ENCODE measurements at regions of chr1 and their contacts with region 1.

Region 1: GRCh38 chr1:89198491-89199072 is at the start of gene GBP4:
- DNase-seq: peak; percentile 72
- ATAC-seq: peak; percentile 44
- H3K4me3 ChIP-seq: peak within 1 kb of the TSS; percentile 59 to 89 (median 83)
- H3K4me3 Mint-ChIP-seq: peak within 1 kb of the TSS; percentile 94
- H3K27ac ChIP-seq: peak within 1 kb of the TSS; percentile 74 to 85
- H3K27ac Mint-ChIP-seq: peak within 1 kb of the TSS; percentile 88
- H3K4me1 ChIP-seq: peaks cover 34 to 37% of the 10 kb centered on the region in 2 donors
- H3K4me1 Mint-ChIP-seq: peaks cover 48% of the 10 kb centered on the region
- H3K27me3 ChIP-seq: no peaks in the 10 kb centered on the region
- H3K27me3 Mint-ChIP-seq: no peaks in the 10 kb centered on the region
- CTCF ChIP-seq: no peak
- total RNA-seq, gene GBP4: 35.3 and 43.9 TPM in 2 replicates

Region 2: DNA sequence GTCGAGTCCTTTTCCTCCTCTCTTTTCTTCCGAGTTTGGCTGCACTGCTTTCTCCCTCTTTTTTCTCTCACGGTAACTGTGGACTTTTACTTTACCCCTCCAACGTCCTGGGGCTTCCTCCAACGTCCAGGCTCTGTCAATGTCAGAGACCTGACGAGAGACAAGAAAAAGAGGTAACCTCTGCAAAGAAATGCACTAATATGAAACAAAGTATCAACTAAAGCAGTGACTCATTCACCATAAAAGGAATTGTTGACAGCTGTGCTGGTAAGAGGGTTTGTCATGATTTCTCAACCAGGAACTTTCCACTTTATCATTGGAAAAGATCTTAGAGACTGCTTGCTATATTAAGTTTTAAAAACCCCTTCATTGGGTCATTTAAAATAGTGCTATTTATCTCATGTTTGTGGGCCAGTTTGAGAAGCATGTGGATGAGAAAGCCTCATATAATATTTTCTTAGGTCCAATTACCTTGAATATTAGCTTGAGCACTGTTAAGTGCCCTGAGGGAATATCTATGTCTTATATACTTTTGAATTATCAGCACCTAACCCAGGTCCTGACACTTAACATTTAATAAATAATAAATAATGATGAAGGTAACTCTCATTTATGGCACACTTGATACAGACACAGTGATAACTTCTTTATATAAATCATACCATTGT is 72.5 kb before region 1 on chr1 and contains the start of gene GBP2:
- CTCF ChIA-PET with region 1: interaction called, 4 read pairs
- POLR2A ChIA-PET with region 1: interaction called, 5 read pairs
- intact Hi-C with region 1: loop called (anchors 2 kb)
- DNase-seq: peak; percentile 16
- ATAC-seq: peak; percentile 79
- H3K4me3 ChIP-seq: peak within 1 kb of the TSS; percentile 43 to 75 (median 59)
- H3K4me3 Mint-ChIP-seq: peak within 1 kb of the TSS; percentile 96
- H3K27ac ChIP-seq: peak within 1 kb of the TSS; percentile 60 to 61
- H3K27ac Mint-ChIP-seq: peak within 1 kb of the TSS; percentile 94
- H3K4me1 ChIP-seq: peaks cover 38 to 45% of the 10 kb centered on the region in 2 donors
- H3K4me1 Mint-ChIP-seq: peaks cover 61% of the 10 kb centered on the region
- H3K27me3 ChIP-seq: no peaks in the 10 kb centered on the region
- H3K27me3 Mint-ChIP-seq: no peaks in the 10 kb centered on the region
- CTCF ChIP-seq: no peak
- total RNA-seq, gene GBP2: 29.2 and 31.9 TPM in 2 replicates

Region 3: GRCh38 chr1:89274411-89274857 is 75.9 kb after region 1 on chr1:
- CTCF ChIA-PET with region 1: no interaction called
- POLR2A ChIA-PET with region 1: interaction called, 4 read pairs
- intact Hi-C with region 1: loop called (anchors 2 kb)
- DNase-seq: no peak
- ATAC-seq: no peak
- H3K4me3 ChIP-seq: peak overlapping the region in 1 of 5 experiments; percentile 18
- H3K4me3 Mint-ChIP-seq: peak overlapping the region; percentile 75
- H3K27ac ChIP-seq: no peak overlapping the region
- H3K27ac Mint-ChIP-seq: peak overlapping the region; percentile 70
- H3K4me1 ChIP-seq: peaks cover 30 to 37% of the 10 kb centered on the region in 2 donors
- H3K4me1 Mint-ChIP-seq: peaks cover 53% of the 10 kb centered on the region
- H3K27me3 ChIP-seq: no peaks in the 10 kb centered on the region
- H3K27me3 Mint-ChIP-seq: no peaks in the 10 kb centered on the region
- CTCF ChIP-seq: no peak

Region 4: GRCh38 chr1:89322402-89322801 is 123.8 kb after region 1 on chr1:
- CTCF ChIA-PET with region 1: no interaction called
- POLR2A ChIA-PET with region 1: no interaction called
- intact Hi-C with region 1: no loop called
- DNase-seq: no peak
- ATAC-seq: no peak
- H3K4me3 ChIP-seq: no peak overlapping the region
- H3K4me3 Mint-ChIP-seq: no peak overlapping the region
- H3K27ac ChIP-seq: no peak overlapping the region
- H3K27ac Mint-ChIP-seq: no peak overlapping the region
- H3K4me1 ChIP-seq: no peaks in the 10 kb centered on the region
- H3K4me1 Mint-ChIP-seq: no peaks in the 10 kb centered on the region
- H3K27me3 ChIP-seq: no peaks in the 10 kb centered on the region
- H3K27me3 Mint-ChIP-seq: peaks cover 29% of the 10 kb centered on the region
- CTCF ChIP-seq: no peak

Region 5: DNA sequence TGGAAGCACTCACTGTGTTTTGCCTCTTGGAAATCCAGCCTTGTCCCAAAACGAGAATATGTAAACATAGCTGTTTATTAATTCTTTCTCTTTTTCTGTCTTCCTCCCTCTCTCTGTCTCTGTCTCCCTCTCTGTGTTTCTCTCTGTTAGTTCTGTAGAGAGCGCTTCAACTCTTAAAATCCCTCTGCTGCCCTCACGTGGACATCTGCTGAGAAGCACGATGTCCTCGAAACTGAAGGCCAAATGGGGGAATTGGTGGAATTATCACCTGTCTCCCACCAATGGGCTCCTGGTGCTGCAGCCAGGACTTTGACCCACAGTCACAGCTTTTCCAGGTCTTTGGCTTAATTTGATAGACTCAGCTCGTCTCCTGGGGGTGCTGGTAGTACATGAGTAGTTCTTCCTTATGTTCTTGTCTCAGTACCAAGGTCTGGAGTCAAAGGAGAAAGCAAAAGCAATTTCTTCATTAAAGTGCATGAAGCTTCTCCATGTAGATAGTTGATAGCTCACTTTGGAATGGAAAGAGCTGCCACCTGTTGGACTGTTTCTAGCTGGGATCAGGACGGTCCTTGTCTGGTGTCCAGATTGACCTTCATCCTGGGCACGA is 159.8 kb after region 1 on chr1:
- CTCF ChIA-PET with region 1: interaction called, 7 read pairs
- POLR2A ChIA-PET with region 1: no interaction called
- intact Hi-C with region 1: loop called (anchors 2 kb)
- DNase-seq: peak; percentile 83
- ATAC-seq: peak; percentile 92
- H3K4me3 ChIP-seq: no peak overlapping the region
- H3K4me3 Mint-ChIP-seq: no peak overlapping the region
- H3K27ac ChIP-seq: no peak overlapping the region
- H3K27ac Mint-ChIP-seq: no peak overlapping the region
- H3K4me1 ChIP-seq: no peaks in the 10 kb centered on the region
- H3K4me1 Mint-ChIP-seq: peaks cover 2% of the 10 kb centered on the region
- H3K27me3 ChIP-seq: no peaks in the 10 kb centered on the region
- H3K27me3 Mint-ChIP-seq: peaks cover 3% of the 10 kb centered on the region
- CTCF ChIP-seq: peak; percentile 92